ENCODE measurements at regions of chr1 and their contacts with region 1.

Region 1: DNA sequence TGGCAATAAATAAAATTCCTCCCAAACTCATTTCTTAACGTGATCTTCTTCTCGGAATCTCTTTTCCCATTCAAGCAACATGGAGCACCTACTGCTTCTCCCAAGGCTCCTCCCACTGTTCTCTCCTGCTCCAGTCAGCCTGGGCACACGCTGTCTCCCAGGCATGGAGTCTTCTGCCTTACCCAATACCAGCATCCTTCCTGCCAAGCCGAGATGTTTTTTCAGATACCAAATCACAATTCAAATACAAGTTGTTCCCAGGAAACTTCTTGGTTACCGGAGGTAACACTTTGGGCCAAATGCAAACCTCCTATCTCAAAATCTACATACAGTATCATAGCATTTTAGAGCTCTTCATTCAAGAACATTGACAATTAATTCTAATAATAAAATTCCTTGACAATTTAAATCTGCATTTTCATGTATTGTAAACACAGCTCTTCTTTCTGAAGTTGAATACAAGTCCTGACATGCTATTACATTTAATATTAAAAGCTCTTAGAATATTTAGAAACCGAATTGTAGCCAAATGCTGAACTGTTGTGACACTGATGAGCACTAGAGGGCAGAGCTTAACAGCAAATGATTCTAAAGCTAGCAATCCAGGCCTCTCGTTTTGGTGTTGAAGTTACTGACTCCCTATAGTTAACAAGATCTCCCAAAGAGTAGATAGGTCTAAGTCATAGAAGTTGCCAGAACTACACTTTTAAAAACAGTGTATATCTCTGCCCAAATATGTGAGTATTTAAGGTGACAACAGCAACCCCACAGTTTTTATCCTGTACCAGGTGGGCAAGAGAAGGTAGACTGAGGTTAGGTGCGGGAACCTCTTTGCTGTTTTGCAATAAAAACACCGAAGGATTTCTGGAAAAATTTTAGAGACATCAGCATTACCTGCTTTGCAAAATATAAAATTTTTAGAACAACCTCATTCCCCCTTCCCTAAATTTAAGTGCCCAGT is 52.3 kb downstream of the BCAR3 start:
- DNase-seq: peak in 1 of 3 donors; percentile 51
- ATAC-seq: peak; percentile 91 to 95 (median 94)
- H3K4me3 ChIP-seq: no peak overlapping the region
- H3K27ac ChIP-seq: no peak overlapping the region
- H3K4me1 ChIP-seq: no peaks in the 10 kb centered on the region
- H3K27me3 ChIP-seq: no peaks in the 10 kb centered on the region
- CTCF ChIP-seq: peak; percentile 76 to 93 (median 79)
- POLR2A ChIP-seq: no peak

Region 2: DNA sequence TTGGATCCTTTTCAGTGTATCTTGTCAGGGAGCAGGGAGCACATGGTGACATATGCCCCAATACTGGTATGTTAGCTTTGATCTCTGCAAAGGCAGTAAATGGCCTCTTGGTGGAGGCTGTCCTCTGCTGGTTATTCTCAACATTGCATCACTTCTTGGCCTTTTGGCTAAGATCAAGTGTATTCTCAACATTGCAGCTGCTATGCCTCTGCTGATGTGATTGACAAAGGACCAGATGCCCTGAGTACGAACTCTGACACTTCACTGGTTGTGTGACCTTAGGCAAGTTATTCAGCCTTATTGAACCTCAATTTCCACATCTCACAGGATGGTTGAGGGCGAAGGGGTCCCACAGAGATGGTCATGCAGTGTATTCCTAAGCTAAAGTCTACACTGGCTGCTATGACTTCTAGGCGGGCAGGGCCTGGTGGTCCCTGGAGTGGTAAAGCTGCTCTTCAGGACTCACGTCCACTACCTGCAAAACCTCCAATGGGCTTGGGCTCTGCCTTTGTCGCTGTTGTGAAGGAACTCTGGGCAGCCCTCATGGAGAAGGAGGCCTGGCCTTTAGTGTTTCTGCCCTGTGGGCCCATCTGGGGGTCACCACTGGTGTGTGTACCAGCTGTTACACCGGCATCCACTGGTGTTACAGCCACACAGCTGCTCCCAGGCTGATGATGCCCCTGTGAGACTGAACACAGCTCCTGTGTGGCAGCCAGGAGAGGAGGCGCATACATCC is 184.8 kb after region 1 on chr1:
- intact Hi-C with region 1: loop called (anchors 5 kb)
- DNase-seq: peak in 1 of 3 donors; percentile 63
- ATAC-seq: peak; percentile 90 to 91 (median 91)
- H3K4me3 ChIP-seq: no peak overlapping the region
- H3K27ac ChIP-seq: no peak overlapping the region
- H3K4me1 ChIP-seq: no peaks in the 10 kb centered on the region
- H3K27me3 ChIP-seq: no peaks in the 10 kb centered on the region
- CTCF ChIP-seq: peak; percentile 95 to 99 (median 98)
- POLR2A ChIP-seq: no peak